Endothelial cell of umbilical vein (primary cell): ENCODE measurements at regions of chr1 and their contacts with region 1.

Region 1: GRCh38 chr1:205791568-205792180 is 16.4 kb upstream of the RAB29 start:
- DNase-seq: peak; percentile 53
- H3K4me3 ChIP-seq: no peak overlapping the region
- H3K27ac ChIP-seq: no peak overlapping the region
- H3K4me1 ChIP-seq: no peaks in the 10 kb centered on the region
- H3K27me3 ChIP-seq: no peaks in the 10 kb centered on the region
- CTCF ChIP-seq: peak; percentile 71 to 86
- POLR2A ChIP-seq: no peak

Region 2: DNA sequence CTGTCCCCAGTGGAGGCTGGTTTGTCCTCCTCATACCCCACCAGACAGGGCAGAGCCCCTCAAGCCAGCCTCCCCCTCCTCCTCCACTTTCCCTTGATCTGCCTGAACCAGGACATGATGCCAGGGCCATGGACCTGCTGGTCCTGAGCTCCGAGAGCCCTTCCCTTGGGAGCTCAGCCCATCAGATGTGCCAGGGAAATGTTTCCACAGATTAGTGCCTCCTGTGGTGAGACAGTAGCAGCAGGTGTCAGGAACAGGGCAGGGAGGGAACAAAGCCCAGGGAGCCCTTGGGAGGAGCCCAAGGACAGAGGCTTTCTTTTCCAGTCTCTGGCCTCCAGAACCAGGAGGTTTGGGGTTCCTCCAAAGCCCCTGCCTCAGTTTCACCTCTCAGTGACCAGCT is 35.9 kb after region 1 on chr1:
- CTCF ChIA-PET with region 1: interaction called, 6 read pairs
- POLR2A ChIA-PET with region 1: no interaction called
- dilution Hi-C with region 1: no loop called
- intact Hi-C with region 1: loop called (anchors 2 kb)
- DNase-seq: no peak
- H3K4me3 ChIP-seq: no peak overlapping the region
- H3K27ac ChIP-seq: no peak overlapping the region
- H3K4me1 ChIP-seq: no peaks in the 10 kb centered on the region
- H3K27me3 ChIP-seq: peaks cover 5 to 14% of the 10 kb centered on the region in 2 experiments
- CTCF ChIP-seq: no peak
- POLR2A ChIP-seq: no peak

Region 3: GRCh38 chr1:205907794-205908193 is 116.1 kb after region 1 on chr1:
- CTCF ChIA-PET with region 1: interaction called, 215 read pairs
- POLR2A ChIA-PET with region 1: no interaction called
- dilution Hi-C with region 1: no loop called
- intact Hi-C with region 1: loop called (anchors 1 kb)
- DNase-seq: peak; percentile 46
- H3K4me3 ChIP-seq: no peak overlapping the region
- H3K27ac ChIP-seq: no peak overlapping the region
- H3K4me1 ChIP-seq: no peaks in the 10 kb centered on the region
- H3K27me3 ChIP-seq: peaks cover 5 to 9% of the 10 kb centered on the region in 2 experiments
- CTCF ChIP-seq: peak; percentile 65 to 75
- POLR2A ChIP-seq: no peak